ENCODE measurements at regions of chr1 and their contacts with region 1.

Region 1: GRCh38 chr1:101653482-101653946 is 343.2 kb downstream of the OLFM3 start:
- DNase-seq: peak; percentile 12 to 20
- H3K4me3 ChIP-seq: no peak overlapping the region
- H3K4me3 Mint-ChIP-seq: no peak overlapping the region
- H3K27ac Mint-ChIP-seq: no peak overlapping the region
- H3K4me1 ChIP-seq: no peaks in the 10 kb centered on the region
- H3K4me1 Mint-ChIP-seq: no peaks in the 10 kb centered on the region
- H3K27me3 ChIP-seq: no peaks in the 10 kb centered on the region
- H3K27me3 Mint-ChIP-seq: no peaks in the 10 kb centered on the region
- CTCF ChIP-seq: peak; percentile 17 to 33

Region 2: DNA sequence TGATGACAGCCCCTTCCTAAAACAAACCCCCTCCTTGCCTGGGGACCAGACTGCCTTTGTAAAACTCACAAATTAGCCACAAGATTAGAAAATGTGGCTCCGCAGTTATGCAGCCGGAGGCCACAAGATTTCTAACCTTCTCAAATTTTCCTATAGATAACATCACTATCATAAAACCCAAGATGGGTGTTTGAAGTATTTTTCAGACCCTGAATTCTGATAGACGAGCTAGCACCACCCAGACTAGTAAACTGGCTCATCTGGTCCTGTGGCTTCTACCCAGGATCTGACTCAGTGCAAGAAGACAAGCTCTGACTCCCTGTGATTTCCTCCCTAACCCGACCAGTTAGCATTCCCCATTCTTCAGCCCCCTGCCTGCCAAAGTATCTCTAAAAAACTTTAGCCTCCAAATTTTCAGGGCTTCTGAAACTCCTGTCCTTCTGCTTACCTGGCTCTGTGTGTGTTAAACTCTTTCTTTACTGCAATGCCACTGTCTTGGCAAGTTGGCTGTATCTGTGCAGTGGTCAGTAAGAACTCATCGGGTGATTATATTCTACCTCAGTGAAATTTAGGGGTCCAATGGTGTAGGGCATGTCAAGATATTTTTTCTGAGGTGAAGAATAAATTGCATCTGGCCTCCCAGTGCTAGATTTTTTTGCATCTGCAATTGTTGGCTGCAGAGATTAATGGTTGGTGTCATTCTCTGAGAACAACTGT is 314.6 kb before region 1 on chr1:
- CTCF ChIA-PET with region 1: no interaction called
- POLR2A ChIA-PET with region 1: no interaction called
- intact Hi-C with region 1: no loop called
- DNase-seq: no peak
- H3K4me3 ChIP-seq: no peak overlapping the region
- H3K4me3 Mint-ChIP-seq: no peak overlapping the region
- H3K27ac Mint-ChIP-seq: no peak overlapping the region
- H3K4me1 ChIP-seq: no peaks in the 10 kb centered on the region
- H3K4me1 Mint-ChIP-seq: peaks cover 8% of the 10 kb centered on the region
- H3K27me3 ChIP-seq: no peaks in the 10 kb centered on the region
- H3K27me3 Mint-ChIP-seq: peaks cover 15% of the 10 kb centered on the region
- CTCF ChIP-seq: no peak

Region 3: DNA sequence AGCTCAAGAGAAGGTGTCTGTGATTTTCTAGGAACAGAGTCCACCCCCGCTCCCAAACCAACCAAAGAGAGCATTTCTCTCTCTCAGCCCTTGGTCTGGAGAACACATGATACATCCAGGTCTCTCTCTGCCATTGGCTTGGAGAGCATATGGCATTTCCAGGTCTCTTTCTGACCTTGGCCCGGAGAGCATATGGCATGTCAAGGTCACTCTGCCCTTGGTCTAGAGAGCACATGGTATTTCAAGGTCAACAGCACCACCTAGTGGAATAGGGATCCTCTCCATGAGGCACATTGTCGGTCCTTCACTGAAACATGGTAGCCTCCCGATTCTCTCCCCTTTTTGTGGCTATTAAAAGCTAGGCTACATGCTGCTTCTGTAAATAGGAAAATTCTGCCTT is 780.9 kb after region 1 on chr1:
- CTCF ChIA-PET with region 1: no interaction called
- POLR2A ChIA-PET with region 1: no interaction called
- intact Hi-C with region 1: loop called (anchors 5 kb)
- DNase-seq: peak; percentile 32 to 36
- H3K4me3 ChIP-seq: no peak overlapping the region
- H3K4me3 Mint-ChIP-seq: no peak overlapping the region
- H3K27ac Mint-ChIP-seq: no peak overlapping the region
- H3K4me1 ChIP-seq: no peaks in the 10 kb centered on the region
- H3K4me1 Mint-ChIP-seq: no peaks in the 10 kb centered on the region
- H3K27me3 ChIP-seq: no peaks in the 10 kb centered on the region
- H3K27me3 Mint-ChIP-seq: no peaks in the 10 kb centered on the region
- CTCF ChIP-seq: peak; percentile 33 to 43